ENCODE measurements at regions of chr6 and their contacts with region 1.

Region 1: DNA sequence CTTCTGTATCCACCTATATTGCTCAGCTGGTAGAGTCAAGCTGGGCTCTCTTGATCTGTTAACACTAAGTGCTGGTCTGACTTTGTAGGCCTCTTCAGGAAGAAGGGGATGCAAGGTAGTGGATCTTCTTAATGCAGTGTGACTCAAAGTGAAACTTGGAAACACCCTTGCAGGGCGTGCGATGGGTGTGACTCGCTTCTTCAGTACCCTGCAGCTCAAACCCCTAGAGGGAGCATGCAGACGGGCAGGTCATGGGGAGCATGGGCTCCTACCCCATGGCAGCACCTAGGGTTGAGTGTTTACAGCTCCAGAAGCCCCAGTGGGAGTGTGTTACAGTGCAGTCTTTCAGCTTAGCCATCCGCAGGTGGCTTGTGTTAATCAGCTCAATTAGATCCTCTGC is 757 bp upstream of the SAMD3 start:
- DNase-seq: no peak
- H3K4me3 ChIP-seq: no peak overlapping the region
- H3K27ac ChIP-seq: no peak overlapping the region
- H3K4me1 ChIP-seq: no peaks in the 10 kb centered on the region
- H3K27me3 ChIP-seq: no peaks in the 10 kb centered on the region
- CTCF ChIP-seq: no peak
- POLR2A ChIP-seq: no peak

Region 2: DNA sequence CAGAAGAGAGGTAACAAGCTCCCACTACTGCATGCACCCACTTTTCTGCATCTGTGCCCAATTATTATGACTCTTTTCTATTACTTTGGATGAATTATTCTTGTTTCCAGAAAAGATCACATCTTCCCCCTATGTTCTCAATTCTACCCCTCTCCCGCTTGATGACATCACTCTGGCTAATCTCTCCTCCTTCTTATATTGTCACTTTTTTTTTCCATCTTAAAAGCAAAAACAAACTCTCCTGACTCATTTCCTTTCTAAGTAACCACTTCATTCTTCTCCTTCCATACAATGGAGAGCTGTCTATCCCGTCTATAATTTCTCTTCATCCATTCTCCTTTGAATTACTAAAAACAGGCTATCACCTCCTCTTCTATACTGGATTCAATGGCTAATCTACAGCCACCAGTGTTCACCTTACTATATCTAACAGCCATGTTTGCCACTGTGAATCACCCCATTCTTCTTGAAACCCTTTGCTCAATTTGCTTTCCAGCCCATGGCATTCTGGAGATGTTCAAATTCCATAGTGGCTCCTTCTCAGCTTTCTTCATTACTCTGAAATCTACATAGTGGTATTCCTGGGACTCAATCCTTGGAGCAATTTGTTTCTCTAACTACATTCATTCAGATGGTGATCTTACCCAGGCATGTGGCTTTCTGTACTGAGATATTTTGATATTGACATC is 891.9 kb before region 1 on chr6:
- intact Hi-C with region 1: loop called (anchors 5 kb)
- DNase-seq: no peak
- H3K4me3 ChIP-seq: no peak overlapping the region
- H3K27ac ChIP-seq: no peak overlapping the region
- H3K4me1 ChIP-seq: no peaks in the 10 kb centered on the region
- H3K27me3 ChIP-seq: no peaks in the 10 kb centered on the region
- CTCF ChIP-seq: no peak
- POLR2A ChIP-seq: no peak

Region 3: DNA sequence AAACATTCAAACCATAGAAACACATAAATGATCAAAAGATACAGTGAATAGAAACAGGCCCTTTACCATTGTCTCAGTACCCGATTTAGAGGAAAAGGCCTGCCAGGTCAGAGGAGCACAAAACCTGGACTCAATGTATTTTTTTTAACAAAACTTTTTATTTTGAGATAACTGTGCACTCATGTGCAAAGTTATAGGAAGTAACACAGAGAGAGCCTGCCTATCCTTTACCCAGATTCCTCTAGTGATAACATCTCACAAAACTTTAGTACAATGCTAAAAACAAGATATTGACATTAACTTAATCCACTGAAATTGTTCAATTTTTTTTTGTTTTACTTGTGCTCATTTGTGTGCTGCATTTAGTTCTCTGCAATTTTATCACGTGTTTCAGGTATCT is 36.0 kb after region 1 on chr6:
- intact Hi-C with region 1: no loop called
- DNase-seq: no peak
- H3K4me3 ChIP-seq: no peak overlapping the region
- H3K27ac ChIP-seq: no peak overlapping the region
- H3K4me1 ChIP-seq: no peaks in the 10 kb centered on the region
- H3K27me3 ChIP-seq: no peaks in the 10 kb centered on the region
- CTCF ChIP-seq: no peak
- POLR2A ChIP-seq: no peak